Left cardiac atrium (tissue), 4 donors: ENCODE measurements at regions of chr5 and their contacts with region 1.

Region 1: GRCh38 chr5:154405078-154405792 is 40.6 kb upstream of the SAP30L start:
- DNase-seq: peak; percentile 88
- ATAC-seq: peak; percentile 97

Region 2: GRCh38 chr5:153974131-153974812 is 431.0 kb before region 1 on chr5:
- intact Hi-C with region 1: loop called (anchors 1 to 10 kb)
- DNase-seq: no peak
- ATAC-seq: peak; percentile 44 to 56

Region 3: DNA sequence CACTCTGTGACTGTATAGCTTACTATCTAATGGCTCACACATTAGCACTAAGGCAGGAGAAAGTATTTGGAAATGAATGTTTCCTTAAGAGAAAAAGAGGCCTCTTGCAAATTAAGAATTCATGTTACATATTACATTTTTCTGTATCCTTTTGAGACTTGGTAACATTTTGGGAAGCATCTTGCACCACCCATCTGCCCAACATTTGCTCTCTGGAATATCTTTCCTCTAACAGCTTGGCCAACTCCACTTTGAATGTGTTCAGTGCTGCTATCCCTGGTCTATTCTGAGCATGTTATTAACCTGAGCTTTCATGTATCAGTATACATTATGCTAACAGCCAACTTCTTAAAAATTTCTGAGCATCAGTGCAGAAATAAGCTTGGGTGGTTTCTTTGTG is 339.3 kb before region 1 on chr5:
- intact Hi-C with region 1: loop called (anchors 5 kb)
- DNase-seq: no peak
- ATAC-seq: no peak

Region 4: GRCh38 chr5:154072414-154073171 is 332.6 kb before region 1 on chr5:
- intact Hi-C with region 1: loop called (anchors 5 kb)
- DNase-seq: peak; percentile 81
- ATAC-seq: peak; percentile 93 to 94

Region 5: DNA sequence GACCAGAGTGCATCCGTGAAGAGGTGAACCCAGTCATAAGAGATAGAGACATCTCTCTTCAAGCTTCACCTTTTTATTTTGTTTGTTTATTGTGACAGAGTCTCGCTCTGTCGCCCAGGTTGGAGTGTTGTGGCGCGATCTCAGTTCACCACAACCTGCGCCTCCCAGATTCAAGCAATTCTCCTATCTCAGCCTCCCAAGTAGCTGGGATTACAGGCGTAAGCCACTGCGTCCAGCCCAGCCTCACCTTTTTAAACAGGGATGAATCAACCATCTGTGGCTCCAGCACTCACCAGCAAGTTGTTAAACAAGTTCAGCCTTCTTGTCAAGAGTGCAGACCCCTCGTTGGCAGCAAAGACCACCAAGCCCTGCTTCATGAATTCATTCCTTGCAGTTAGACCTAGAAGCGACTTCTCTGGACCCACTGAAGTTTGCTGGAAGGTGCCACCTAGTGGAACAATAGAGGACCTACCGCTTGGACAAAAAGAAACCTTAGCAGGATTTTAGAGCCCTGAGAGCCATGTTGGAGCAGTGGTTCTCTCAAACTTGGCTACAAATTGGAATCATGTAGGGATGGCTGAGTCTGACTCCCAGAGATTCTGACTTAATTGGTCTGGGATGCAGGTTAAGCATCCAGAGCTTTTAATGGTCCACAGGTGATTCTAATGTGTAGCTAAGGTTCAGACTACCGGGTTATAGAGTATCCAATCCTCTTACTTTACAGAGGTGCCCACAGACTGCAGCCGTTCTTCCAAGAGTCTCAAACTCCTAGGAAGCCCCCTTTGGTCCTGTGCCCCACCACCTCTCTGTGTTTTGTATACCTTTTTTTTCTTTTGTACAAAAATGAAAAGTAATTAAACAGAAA is 225.2 kb before region 1 on chr5:
- intact Hi-C with region 1: loop called in 1 of 2 experiments (anchors 5 kb)
- DNase-seq: no peak
- ATAC-seq: peak; percentile 80 to 82

Region 6: GRCh38 chr5:154189819-154190594 is 215.2 kb before region 1 on chr5:
- intact Hi-C with region 1: loop called (anchors 5 to 10 kb)
- DNase-seq: peak; percentile 92
- ATAC-seq: peak; percentile 94 to 95

Region 7: DNA sequence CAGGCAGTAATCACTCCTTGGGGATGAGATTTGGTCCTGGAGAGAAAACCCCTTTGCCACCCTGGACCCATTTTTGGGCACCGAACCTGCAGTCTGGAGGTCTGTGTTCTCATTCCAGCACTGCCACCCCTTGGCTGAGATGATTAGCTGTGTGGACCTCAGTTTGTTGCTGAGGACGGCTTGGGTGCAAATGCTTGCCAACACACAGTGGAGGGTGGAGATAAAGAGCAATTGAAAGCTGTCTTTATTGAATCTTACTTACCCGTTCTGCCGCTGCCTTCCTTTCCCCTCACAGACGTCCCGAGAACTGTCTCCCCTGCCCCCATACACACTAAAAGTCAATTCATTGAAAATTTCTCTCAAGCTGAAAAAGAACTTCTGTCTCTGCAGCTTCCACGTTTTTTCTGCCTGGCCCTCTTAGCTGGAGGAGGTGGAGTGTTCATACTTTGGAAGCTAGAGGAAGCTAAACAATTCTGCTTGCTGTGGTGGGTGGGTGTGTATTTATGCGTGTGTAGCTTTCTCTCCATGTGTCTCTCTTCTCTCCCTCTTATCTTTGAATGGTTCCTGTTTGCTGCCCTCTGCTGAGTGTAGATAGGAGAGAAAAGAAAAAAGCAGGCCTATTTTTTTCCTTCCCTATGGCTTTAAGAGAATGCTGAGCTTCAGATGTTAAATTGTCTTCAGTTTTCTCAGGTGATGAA is 208.1 kb before region 1 on chr5:
- intact Hi-C with region 1: loop called (anchors 5 to 10 kb)
- DNase-seq: no peak
- ATAC-seq: peak; percentile 68 to 71

Region 8: GRCh38 chr5:154461531-154461930 is 56.3 kb after region 1 on chr5:
- intact Hi-C with region 1: no loop called
- DNase-seq: no peak
- ATAC-seq: no peak